ENCODE measurements at regions of chr7 and their contacts with region 1.

Region 1: GRCh38 chr7:150378853-150379440 is at the start of gene ZNF775:
- DNase-seq: peak; percentile 99
- CTCF ChIP-seq: peak; percentile 10

Region 2: DNA sequence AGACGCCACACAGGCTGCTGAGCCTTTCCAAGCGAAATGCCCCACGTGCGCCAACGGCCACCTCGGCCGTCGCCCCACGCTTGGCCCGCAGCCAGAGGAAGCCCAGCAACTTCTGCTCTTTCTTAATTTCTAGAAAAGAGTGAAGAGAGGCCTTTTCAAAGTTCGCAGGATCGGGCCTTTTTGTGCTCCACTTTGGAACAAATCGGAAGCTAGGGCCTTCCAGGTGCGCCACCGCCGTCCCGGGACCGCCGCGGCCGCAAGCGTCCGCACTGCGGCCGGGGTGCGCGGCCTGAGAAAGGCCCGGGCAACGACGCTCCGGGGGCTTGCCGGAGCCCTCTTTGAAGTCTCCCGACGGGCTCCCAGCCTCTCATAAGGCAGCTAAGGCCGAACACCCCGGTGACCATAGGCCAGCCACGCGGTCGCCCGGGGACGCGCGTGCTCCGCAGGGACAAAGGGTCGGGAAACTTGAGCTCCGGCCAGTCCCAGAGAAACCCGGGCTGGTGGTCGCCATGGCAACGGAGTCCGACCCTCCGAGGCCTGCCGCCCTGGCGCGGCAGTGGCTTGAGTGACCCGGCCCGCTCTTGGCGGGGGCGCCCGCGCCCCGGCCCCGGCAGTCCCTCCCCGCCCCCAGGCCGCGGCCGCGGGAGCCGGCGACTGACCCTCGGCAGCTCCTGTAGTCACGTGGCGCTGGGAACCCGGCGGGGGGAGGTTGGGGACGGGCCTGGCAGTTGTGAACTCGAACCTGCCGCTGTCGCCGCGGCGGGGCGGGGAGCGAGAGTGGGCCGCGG is 10.7 kb before region 1 on chr7 and contains the start of gene REPIN1:
- CTCF ChIA-PET with region 1: interaction called, 16 read pairs
- POLR2A ChIA-PET with region 1: interaction called, 5 read pairs
- DNase-seq: peak; percentile 90
- CTCF ChIP-seq: no peak

Region 3: DNA sequence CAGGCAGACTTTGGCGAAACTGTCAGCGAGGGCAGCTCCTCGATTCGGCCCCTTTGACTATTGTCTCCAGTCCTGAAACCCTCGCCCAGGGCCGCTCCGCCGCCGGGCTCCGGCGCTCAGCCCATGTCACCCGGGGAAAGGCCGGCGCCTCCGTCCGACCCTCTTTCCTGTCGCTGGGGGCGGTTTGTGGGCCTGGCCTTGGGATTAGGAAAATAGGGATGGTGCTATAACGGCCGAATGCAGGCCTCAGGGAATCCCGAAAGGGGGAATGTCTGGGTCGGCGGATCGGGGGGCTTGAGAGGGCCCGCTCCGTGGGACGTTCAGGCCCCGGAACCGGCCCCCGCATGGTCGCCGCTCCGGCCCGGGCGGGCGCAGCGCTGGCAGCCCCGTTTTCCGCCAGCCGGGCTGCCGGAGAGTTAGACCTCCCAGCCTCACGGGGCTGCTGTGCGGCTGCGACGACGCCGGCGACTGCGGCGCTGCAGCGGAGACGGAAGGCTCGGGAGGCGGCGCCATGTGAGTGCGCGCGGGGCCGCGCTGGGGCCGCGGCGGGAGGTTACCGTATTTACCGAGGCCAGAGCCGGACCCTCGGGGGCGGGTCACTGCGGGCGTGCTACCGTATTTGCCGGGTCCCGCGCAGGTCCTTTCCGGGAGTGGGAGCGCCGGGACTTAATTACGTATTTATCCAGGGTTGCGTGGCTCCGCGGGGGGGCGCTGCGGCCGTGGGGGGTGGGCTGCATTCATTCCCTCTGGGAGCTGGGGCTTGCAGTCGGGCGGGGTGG is 26.0 kb after region 1 on chr7:
- CTCF ChIA-PET with region 1: interaction called, 10 read pairs
- POLR2A ChIA-PET with region 1: interaction called, 3 read pairs
- DNase-seq: peak; percentile 87
- CTCF ChIP-seq: peak; percentile 45